Activated CD4-positive, alpha-beta memory T cell treated with anti-CD3 and anti-CD28 coated beads, Interleukin-2, amount 10 ng/mL, durations not matched to agents 7 days and 5 days (primary cell): ENCODE measurements at regions of chr6 and their contacts with region 1.

Region 1: GRCh38 chr6:16761471-16762267 is 409 bp upstream of the ATXN1 start:
- DNase-seq: peak; percentile 89
- H3K4me3 Mint-ChIP-seq: peak overlapping the region; percentile 83
- H3K27ac Mint-ChIP-seq: peak overlapping the region; percentile 96
- H3K4me1 Mint-ChIP-seq: peaks cover 58% of the 10 kb centered on the region
- H3K27me3 Mint-ChIP-seq: no peaks in the 10 kb centered on the region

Region 2: GRCh38 chr6:16319813-16320532 is 441.7 kb before region 1 on chr6:
- CTCF ChIA-PET with region 1: interaction called, 14 read pairs
- POLR2A ChIA-PET with region 1: interaction called, 29 read pairs
- DNase-seq: peak; percentile 74
- H3K4me3 Mint-ChIP-seq: peak overlapping the region; percentile 71
- H3K27ac Mint-ChIP-seq: peak overlapping the region; percentile 98
- H3K4me1 Mint-ChIP-seq: peaks cover 79% of the 10 kb centered on the region
- H3K27me3 Mint-ChIP-seq: no peaks in the 10 kb centered on the region

Region 3: DNA sequence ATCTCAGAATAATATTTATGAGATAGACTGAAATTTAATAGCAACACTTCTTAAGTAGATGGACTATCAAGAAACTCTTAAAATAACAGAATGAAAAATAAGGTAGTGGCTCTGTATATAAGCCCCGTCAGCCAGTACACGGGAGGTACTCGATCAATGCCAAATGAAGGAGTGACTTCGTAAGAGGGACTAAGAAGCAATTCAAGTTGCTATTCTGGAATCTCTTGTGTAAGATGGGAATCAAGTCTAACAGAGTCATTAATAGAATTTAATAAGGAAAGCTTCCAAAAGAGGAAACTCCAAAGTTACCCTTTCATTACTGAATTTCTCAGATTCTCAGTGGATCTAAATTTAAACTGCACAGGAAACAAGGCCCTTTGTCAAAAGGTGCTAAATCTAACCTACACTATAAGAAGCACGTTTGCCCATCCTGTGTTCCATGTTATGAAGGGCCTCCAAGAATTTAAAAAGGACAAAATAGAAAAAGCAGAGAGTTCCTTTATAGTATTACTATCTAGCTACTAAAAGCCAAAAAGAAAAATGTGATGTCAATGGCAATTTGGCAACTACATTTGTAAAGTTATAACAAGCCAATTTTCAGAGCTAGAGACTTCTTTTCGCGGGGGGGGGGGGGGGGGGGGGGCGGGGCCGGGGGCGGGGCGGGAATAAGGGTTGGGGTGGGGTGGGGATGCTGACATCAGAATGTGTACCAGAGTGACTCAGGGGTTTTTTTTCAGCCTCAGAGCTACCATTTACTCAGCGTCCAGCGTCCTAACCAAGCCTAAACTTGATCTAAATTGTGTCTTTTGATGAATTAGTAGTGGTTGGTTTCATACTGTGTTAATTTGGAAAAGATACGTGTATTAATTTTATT is 322.7 kb before region 1 on chr6:
- CTCF ChIA-PET with region 1: interaction called, 5 read pairs
- POLR2A ChIA-PET with region 1: interaction called, 65 read pairs
- DNase-seq: peak; percentile 43
- H3K4me3 Mint-ChIP-seq: peak overlapping the region; percentile 90
- H3K27ac Mint-ChIP-seq: peak overlapping the region; percentile 94
- H3K4me1 Mint-ChIP-seq: peaks cover 73% of the 10 kb centered on the region
- H3K27me3 Mint-ChIP-seq: no peaks in the 10 kb centered on the region

Region 4: DNA sequence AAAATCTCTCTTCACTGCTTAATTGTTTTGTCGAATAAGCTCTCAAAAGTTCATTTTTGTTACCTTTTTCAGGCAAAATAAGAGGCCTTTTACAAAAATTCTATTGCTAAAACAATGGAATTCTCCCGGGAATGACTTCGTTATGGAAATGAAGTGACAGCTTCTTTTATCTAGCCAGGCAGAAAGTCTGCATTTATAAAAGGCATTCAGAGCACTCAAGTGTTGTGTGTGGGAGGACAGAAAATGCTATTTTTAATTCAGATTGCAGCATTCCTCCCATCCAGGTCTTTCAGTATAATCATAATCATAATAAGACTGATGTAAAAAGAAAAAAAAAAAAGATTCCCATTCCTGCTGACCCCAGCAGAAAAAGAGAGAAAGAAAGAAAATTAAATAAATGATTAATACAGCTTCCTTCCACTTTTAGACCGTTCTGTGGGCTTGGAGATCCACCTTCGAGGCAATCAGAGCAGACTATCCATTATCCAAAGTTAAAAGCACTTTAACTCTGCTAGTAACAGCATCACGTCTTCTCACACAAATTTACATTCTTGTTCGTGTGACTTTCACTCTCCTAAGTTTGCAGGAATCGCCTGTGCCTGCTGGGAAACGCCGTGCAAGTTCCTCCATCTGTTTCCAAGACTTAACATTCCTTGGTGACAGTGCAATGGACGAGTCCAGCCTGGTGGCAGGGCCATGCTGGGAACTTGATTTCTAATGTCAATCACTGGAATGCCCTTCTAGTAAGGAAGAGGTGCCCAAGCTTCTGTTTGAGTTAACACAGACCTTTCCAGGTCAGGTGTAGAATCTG is 264.5 kb before region 1 on chr6:
- CTCF ChIA-PET with region 1: no interaction called
- POLR2A ChIA-PET with region 1: no interaction called
- DNase-seq: no peak
- H3K4me3 Mint-ChIP-seq: no peak overlapping the region
- H3K27ac Mint-ChIP-seq: no peak overlapping the region
- H3K4me1 Mint-ChIP-seq: peaks cover 48% of the 10 kb centered on the region
- H3K27me3 Mint-ChIP-seq: no peaks in the 10 kb centered on the region

Region 5: GRCh38 chr6:16657768-16658167 is 103.9 kb before region 1 on chr6:
- CTCF ChIA-PET with region 1: interaction called, 25 read pairs
- POLR2A ChIA-PET with region 1: interaction called, 46 read pairs
- DNase-seq: no peak
- H3K4me3 Mint-ChIP-seq: peak overlapping the region; percentile 45
- H3K27ac Mint-ChIP-seq: peak overlapping the region; percentile 94
- H3K4me1 Mint-ChIP-seq: peaks cover 72% of the 10 kb centered on the region
- H3K27me3 Mint-ChIP-seq: no peaks in the 10 kb centered on the region

Region 6: DNA sequence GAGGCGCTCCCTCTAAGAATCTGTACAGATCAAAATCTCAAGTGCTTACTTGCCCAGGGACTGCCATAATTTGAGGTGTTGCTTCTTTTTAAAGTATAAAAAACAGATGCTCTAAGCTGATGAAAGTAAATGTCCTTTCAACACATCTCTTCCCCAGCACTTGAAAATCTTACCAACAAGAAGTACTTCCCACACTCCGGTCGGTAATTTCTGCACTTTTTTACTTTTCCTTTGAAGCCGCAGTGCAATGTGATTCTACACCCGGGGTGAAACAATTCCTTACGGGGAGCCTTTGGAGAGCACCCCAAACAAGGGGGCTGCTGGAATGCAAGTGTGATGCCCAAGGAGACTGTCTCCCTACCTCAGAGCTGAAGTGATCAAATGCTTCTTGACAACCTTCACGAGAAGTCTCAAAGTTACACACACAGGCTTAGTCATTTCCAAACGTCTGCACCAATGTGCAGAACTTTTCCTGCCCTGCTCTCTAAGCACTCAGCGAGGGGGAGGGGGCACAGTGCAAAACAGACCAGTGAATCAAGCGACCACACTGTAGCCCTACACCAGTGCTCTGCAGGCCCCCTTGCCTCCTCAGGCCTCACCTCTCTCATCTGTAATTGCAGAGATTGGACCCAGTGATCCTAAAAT is 57.1 kb before region 1 on chr6:
- CTCF ChIA-PET with region 1: interaction called, 46 read pairs
- POLR2A ChIA-PET with region 1: interaction called, 74 read pairs
- DNase-seq: peak; percentile 71
- H3K4me3 Mint-ChIP-seq: peak overlapping the region; percentile 80
- H3K27ac Mint-ChIP-seq: peak overlapping the region; percentile 89
- H3K4me1 Mint-ChIP-seq: peaks cover 79% of the 10 kb centered on the region
- H3K27me3 Mint-ChIP-seq: no peaks in the 10 kb centered on the region

Region 7: GRCh38 chr6:16747232-16748024 is 14.2 kb before region 1 on chr6:
- CTCF ChIA-PET with region 1: interaction called, 9 read pairs
- POLR2A ChIA-PET with region 1: interaction called, 13 read pairs
- DNase-seq: no peak
- H3K4me3 Mint-ChIP-seq: no peak overlapping the region
- H3K27ac Mint-ChIP-seq: no peak overlapping the region
- H3K4me1 Mint-ChIP-seq: peaks cover 60% of the 10 kb centered on the region
- H3K27me3 Mint-ChIP-seq: no peaks in the 10 kb centered on the region